Right ventricle myocardium inferior (tissue), 1 donor: ENCODE measurements at regions of chr1 and their contacts with region 1.

Region 1: GRCh38 chr1:65067491-65068201 is 80.4 kb upstream of the AK4 start:
- DNase-seq: peak; percentile 89
- ATAC-seq: peak; percentile 48

Region 2: GRCh38 chr1:64686828-64687724 is 380.6 kb before region 1 on chr1:
- intact Hi-C with region 1: loop called (anchors 10 kb)
- DNase-seq: no peak
- ATAC-seq: peak; percentile 54

Region 3: DNA sequence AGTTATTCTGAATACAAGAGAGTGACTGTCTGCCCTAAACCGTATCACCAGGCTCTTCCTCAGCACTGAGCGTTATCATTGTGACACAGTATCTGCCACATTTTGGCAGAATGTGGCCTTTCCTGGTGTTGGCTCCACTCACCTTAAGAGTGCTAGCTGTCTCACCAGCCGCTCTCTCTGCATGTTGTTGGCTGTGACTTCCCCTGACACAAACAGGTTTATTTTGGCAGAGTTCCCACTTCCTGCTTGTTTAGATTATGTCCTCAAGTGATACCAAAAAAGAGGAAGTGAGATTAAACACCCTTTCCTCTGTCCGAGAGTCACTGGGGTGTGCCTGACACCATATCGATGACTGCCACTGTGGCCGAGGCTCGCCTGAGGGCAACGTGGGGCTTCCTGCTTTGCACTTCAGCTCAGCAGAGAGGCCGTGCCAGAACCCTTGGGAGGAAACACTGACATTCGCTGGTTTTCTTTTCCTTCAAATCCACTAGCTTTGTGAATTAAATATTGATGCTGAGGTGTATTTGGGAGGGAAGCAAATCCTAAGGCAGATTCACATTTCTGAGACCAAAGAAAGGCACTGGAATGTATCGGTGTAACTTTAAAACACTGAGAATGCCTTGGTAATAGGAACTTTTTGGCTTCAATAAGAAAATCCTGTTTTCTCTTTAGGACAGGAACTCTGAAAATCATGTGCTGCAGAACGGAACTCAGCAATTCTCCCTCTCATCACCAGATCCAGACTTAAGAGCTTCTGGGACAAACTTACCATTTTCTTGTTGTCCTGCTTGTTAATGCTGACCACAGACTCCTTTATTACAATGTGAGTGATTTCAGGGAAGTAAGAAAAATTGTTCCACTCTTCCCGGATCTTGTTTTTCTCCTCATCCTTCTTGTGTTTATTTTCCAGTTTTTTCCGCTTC is 203.4 kb before region 1 on chr1:
- intact Hi-C with region 1: loop called (anchors 5 kb)
- DNase-seq: peak; percentile 85
- ATAC-seq: peak; percentile 83

Region 4: GRCh38 chr1:65002508-65003315 is 64.9 kb before region 1 on chr1:
- intact Hi-C with region 1: loop called (anchors 2 kb)
- DNase-seq: peak; percentile 92
- ATAC-seq: peak; percentile 91

Region 5: GRCh38 chr1:65209005-65209885 is 141.6 kb after region 1 on chr1:
- intact Hi-C with region 1: loop called (anchors 2 kb)
- DNase-seq: no peak
- ATAC-seq: peak; percentile 71

Region 6: GRCh38 chr1:65687428-65688214 is 620.0 kb after region 1 on chr1:
- intact Hi-C with region 1: loop called (anchors 10 kb)
- DNase-seq: peak; percentile 88
- ATAC-seq: peak; percentile 76